ENCODE measurements at regions of chrX and their contacts with region 1.

Region 1: GRCh38 chrX:154918060-154918483 is 31.9 kb downstream of the F8A1 start:
- DNase-seq: peak; percentile 84
- ATAC-seq: peak; percentile 82
- H3K4me3 ChIP-seq: peak overlapping the region; percentile 34; the same call in 1 of the 2 replicates
- H3K27ac ChIP-seq: no peak overlapping the region
- H3K4me1 ChIP-seq: no peaks in the 10 kb centered on the region
- H3K27me3 ChIP-seq: no peaks in the 10 kb centered on the region
- CTCF ChIP-seq: peak; percentile 91

Region 2: GRCh38 chrX:154980330-154981096 is 62.4 kb after region 1 on chrX:
- CTCF ChIA-PET with region 1: interaction called, 6 read pairs
- POLR2A ChIA-PET with region 1: no interaction called
- intact Hi-C with region 1: loop called (anchors 1 kb)
- DNase-seq: peak; percentile 80
- ATAC-seq: peak; percentile 94
- H3K4me3 ChIP-seq: peak overlapping the region; percentile 60
- H3K27ac ChIP-seq: no peak overlapping the region
- H3K4me1 ChIP-seq: peaks cover 6% of the 10 kb centered on the region; the same call in 1 of the 2 replicates
- H3K27me3 ChIP-seq: no peaks in the 10 kb centered on the region
- CTCF ChIP-seq: peak; percentile 84

Region 3: DNA sequence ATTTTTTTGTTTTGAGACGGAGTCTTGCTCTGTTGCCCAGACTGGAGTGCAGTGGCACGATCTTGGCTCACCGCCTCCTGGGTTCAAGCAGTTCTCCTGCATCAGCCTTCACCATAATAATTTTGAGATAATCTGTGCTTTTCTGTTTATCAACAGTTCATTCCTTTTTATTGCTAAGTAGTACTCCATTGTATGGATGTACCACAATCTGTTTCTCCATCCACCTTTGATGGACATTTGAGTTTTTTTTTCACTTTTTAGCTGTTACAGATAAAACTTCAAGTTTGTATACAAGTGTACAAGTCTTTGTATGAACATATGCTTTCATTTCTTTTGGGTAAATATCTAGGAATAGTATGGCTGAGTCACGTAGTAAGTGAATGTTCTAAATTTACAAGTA is 117.6 kb after region 1 on chrX:
- CTCF ChIA-PET with region 1: no interaction called
- POLR2A ChIA-PET with region 1: no interaction called
- intact Hi-C with region 1: no loop called
- DNase-seq: no peak
- ATAC-seq: no peak
- H3K4me3 ChIP-seq: no peak overlapping the region
- H3K27ac ChIP-seq: no peak overlapping the region
- H3K4me1 ChIP-seq: no peaks in the 10 kb centered on the region
- H3K27me3 ChIP-seq: no peaks in the 10 kb centered on the region
- CTCF ChIP-seq: no peak

Region 4: GRCh38 chrX:155056877-155057792 is 139.1 kb after region 1 on chrX:
- CTCF ChIA-PET with region 1: no interaction called
- POLR2A ChIA-PET with region 1: no interaction called
- intact Hi-C with region 1: loop called (anchors 10 kb)
- DNase-seq: peak; percentile 73
- ATAC-seq: peak; percentile 82
- H3K4me3 ChIP-seq: no peak overlapping the region
- H3K27ac ChIP-seq: no peak overlapping the region
- H3K4me1 ChIP-seq: no peaks in the 10 kb centered on the region
- H3K27me3 ChIP-seq: no peaks in the 10 kb centered on the region
- CTCF ChIP-seq: peak; percentile 81

Region 5: GRCh38 chrX:155094468-155095061 is 176.5 kb after region 1 on chrX:
- CTCF ChIA-PET with region 1: no interaction called
- POLR2A ChIA-PET with region 1: no interaction called
- intact Hi-C with region 1: loop called (anchors 5 kb)
- DNase-seq: peak; percentile 58
- ATAC-seq: peak; percentile 75
- H3K4me3 ChIP-seq: no peak overlapping the region
- H3K27ac ChIP-seq: no peak overlapping the region
- H3K4me1 ChIP-seq: no peaks in the 10 kb centered on the region
- H3K27me3 ChIP-seq: no peaks in the 10 kb centered on the region
- CTCF ChIP-seq: peak; percentile 80

Region 6: DNA sequence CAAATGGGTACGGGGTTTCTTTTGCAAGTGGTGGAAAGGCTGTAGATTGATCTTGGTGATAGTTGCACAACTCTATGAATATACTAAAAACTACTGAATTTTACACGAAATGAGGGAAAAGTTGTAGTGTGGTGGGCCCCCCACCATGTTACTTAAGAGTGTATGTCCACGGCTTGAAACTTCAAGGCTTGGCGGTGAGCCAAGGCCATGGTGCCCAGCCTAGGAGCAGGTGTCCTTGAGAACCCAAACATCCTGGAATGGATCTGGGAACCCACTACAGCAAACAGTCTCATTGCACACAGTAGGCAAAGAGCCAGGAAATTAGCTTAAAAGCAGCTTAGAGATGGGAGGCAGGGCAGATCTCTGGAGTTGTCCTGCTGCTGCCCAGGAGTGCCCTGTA is 216.2 kb after region 1 on chrX:
- CTCF ChIA-PET with region 1: no interaction called
- POLR2A ChIA-PET with region 1: no interaction called
- intact Hi-C with region 1: loop called (anchors 2 kb)
- DNase-seq: no peak
- ATAC-seq: no peak
- H3K4me3 ChIP-seq: no peak overlapping the region
- H3K27ac ChIP-seq: no peak overlapping the region
- H3K4me1 ChIP-seq: no peaks in the 10 kb centered on the region
- H3K27me3 ChIP-seq: no peaks in the 10 kb centered on the region
- CTCF ChIP-seq: no peak

Region 7: GRCh38 chrX:155864655-155865054 is 946.6 kb after region 1 on chrX:
- CTCF ChIA-PET with region 1: no interaction called
- POLR2A ChIA-PET with region 1: no interaction called
- intact Hi-C with region 1: loop called (anchors 2 kb)
- DNase-seq: peak; percentile 31
- ATAC-seq: no peak
- H3K4me3 ChIP-seq: no peak overlapping the region
- H3K27ac ChIP-seq: no peak overlapping the region
- H3K4me1 ChIP-seq: no peaks in the 10 kb centered on the region
- H3K27me3 ChIP-seq: no peaks in the 10 kb centered on the region
- CTCF ChIP-seq: peak; percentile 44; the same call in 1 of the 2 replicates

Measured in PC-3 (cell line).